Cardiac septum (tissue), 1 donor: ENCODE measurements at regions of chr2 and their contacts with region 1.

Region 1: DNA sequence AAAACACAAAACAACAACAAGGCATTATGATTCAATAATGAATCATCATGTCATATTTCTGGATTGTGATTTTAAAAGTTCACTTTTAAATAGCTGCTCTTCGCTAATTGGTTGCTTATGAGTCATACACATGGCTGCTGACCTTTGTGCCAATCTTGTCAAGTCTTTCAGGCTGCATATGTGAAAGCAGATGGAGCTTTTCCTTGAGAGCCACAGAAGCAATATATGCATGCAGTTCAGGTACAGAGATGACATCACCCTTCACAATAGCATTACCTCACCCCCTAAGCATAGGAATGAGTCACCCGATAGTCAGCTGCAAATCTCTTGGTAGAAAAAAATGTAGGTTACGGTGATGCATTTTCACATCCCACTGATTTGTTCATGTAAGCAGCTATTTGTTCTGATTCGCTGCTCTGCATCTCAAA is 27.2 kb downstream of the EIF2AK3 start:
- DNase-seq: no peak

Region 2: DNA sequence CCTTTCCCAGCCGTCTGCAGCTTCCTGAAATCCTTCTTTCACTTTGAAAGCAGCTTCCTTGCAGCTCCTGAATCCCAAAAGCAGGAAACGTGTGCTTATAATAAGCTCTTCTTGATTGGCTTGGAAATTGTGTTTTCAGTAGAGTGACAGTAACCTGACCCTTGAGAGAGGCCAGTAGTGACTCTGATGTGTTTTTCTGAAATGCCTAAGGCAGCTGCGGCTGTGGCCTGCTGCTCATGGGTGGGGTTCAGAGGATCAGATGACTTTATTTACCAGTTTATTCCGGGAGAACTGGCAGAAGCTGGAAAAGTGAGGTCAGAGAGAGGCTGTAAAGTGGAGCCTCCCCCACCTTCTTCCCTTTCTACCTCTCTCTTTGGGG is 59.5 kb after region 1 on chr2:
- intact Hi-C with region 1: loop called (anchors 2 kb)
- DNase-seq: no peak